MCF 10A (cell line): ENCODE measurements at regions of chr20 and their contacts with region 1.

Region 1: GRCh38 chr20:22339091-22339881 is 245.1 kb downstream of the FOXA2 start:
- DNase-seq: peak; percentile 84
- H3K4me3 Mint-ChIP-seq: no peak overlapping the region
- H3K27ac Mint-ChIP-seq: no peak overlapping the region
- H3K4me1 Mint-ChIP-seq: peaks cover 36% of the 10 kb centered on the region
- H3K27me3 Mint-ChIP-seq: no peaks in the 10 kb centered on the region
- CTCF ChIP-seq: peak; percentile 76

Region 2: GRCh38 chr20:22243067-22243466 is 96.2 kb before region 1 on chr20:
- CTCF ChIA-PET with region 1: no interaction called
- POLR2A ChIA-PET with region 1: no interaction called
- intact Hi-C with region 1: no loop called
- DNase-seq: no peak
- H3K4me3 Mint-ChIP-seq: no peak overlapping the region
- H3K27ac Mint-ChIP-seq: no peak overlapping the region
- H3K4me1 Mint-ChIP-seq: no peaks in the 10 kb centered on the region
- H3K27me3 Mint-ChIP-seq: peaks cover 34% of the 10 kb centered on the region
- CTCF ChIP-seq: no peak

Region 3: DNA sequence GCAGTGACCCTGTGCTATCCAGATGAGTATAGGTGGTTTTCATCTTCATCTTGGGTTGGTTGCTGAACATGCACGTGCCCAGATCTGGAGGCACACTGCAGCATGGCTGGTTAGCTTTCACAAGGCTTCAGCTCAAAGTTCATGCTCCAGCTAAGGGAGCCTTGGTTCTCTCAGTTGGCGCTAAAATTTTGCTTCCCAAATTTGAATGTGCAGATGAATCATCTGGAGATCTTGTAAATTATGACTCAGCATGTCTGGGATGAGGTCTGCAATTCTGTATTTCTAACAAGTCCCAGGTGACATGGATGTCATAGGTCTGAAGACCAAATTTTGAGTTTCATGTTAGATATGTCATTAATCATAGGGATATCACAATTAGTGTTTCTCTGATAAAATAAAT is 14.3 kb after region 1 on chr20:
- CTCF ChIA-PET with region 1: interaction called, 102 read pairs
- POLR2A ChIA-PET with region 1: interaction called, 9 read pairs
- intact Hi-C with region 1: no loop called
- DNase-seq: peak; percentile 42
- H3K4me3 Mint-ChIP-seq: no peak overlapping the region
- H3K27ac Mint-ChIP-seq: no peak overlapping the region
- H3K4me1 Mint-ChIP-seq: no peaks in the 10 kb centered on the region
- H3K27me3 Mint-ChIP-seq: no peaks in the 10 kb centered on the region
- CTCF ChIP-seq: no peak

Region 4: DNA sequence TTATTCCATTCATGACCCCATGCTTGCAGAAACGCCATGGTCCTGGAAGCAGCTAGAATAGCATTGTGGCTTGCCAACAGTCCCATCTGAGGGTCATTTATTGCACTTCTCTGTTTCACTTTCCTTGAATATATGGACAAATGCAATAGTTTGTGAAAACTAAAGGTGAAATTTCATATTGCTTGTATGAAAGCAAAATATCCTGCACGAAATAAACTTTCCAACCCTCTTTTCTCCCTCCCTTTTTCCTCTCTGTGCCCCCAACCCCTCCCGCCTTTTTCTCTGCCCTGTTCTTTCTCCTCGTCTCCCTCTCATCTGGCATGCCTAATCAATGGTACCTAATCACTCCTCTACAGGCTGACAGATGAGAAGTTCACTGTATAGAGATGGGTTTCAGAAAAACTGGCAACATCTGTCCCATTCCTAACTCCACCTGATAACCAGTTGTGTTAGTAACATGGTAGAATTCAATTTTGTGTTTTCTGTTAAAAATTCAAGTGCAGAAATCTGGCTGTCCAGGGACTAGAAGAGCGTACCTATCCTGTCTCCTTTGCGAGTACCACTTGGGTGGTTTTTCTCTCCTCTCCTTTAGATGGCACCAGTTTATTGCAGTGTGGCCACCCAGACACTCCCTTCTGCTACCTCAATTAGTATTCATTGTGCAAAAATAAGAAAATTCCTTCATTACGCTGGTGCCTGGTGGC is 46.5 kb after region 1 on chr20:
- CTCF ChIA-PET with region 1: interaction called, 62 read pairs
- POLR2A ChIA-PET with region 1: interaction called, 13 read pairs
- intact Hi-C with region 1: loop called (anchors 2 kb)
- DNase-seq: peak; percentile 50
- H3K4me3 Mint-ChIP-seq: no peak overlapping the region
- H3K27ac Mint-ChIP-seq: no peak overlapping the region
- H3K4me1 Mint-ChIP-seq: peaks cover 51% of the 10 kb centered on the region
- H3K27me3 Mint-ChIP-seq: no peaks in the 10 kb centered on the region
- CTCF ChIP-seq: peak; percentile 27

Region 5: DNA sequence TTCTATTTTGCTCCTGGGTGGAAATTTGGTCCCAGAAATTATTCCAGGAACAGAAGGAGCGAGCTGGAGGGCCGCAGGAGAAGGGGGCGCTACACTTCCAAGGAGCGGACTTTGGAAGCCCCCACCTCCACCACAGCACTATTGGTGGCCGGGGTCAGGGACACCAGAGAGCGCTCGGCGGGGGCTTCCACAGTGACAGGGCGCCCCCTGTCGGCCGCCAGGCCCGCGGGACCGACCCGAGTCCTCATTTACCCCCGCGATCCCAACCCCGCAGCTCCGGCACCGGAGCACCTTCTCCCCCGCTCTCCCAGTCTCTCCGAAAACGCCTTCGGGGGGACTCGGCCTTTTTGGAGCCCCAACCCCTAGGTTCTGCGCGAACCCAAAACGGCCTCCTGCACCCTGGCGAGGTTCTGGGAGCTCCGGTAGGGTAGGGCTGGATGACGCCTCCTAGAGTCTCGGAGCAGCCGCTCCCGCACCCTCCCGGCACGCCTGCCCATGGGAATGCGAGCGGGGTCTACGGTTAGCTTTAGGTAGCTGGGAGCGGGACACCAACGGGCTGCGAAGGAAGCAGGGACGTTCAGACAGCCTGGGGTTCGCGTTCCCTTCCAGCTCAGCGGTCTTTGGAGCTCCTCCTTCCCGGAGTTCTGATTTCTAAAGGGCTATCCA is 247.5 kb after region 1 on chr20:
- CTCF ChIA-PET with region 1: interaction called, 81 read pairs
- POLR2A ChIA-PET with region 1: interaction called, 5 read pairs
- intact Hi-C with region 1: loop called (anchors 1 kb)
- DNase-seq: peak; percentile 36
- H3K4me3 Mint-ChIP-seq: no peak overlapping the region
- H3K27ac Mint-ChIP-seq: no peak overlapping the region
- H3K4me1 Mint-ChIP-seq: no peaks in the 10 kb centered on the region
- H3K27me3 Mint-ChIP-seq: peaks cover 18% of the 10 kb centered on the region
- CTCF ChIP-seq: peak; percentile 83

Region 6: GRCh38 chr20:22684072-22684762 is 344.9 kb after region 1 on chr20:
- CTCF ChIA-PET with region 1: interaction called, 549 read pairs
- POLR2A ChIA-PET with region 1: interaction called, 31 read pairs
- intact Hi-C with region 1: loop called (anchors 1 kb)
- DNase-seq: peak; percentile 82
- H3K4me3 Mint-ChIP-seq: no peak overlapping the region
- H3K27ac Mint-ChIP-seq: no peak overlapping the region
- H3K4me1 Mint-ChIP-seq: peaks cover 29% of the 10 kb centered on the region
- H3K27me3 Mint-ChIP-seq: no peaks in the 10 kb centered on the region
- CTCF ChIP-seq: peak; percentile 87